ENCODE measurements at regions of chr1 and their contacts with region 1.

Region 1: DNA sequence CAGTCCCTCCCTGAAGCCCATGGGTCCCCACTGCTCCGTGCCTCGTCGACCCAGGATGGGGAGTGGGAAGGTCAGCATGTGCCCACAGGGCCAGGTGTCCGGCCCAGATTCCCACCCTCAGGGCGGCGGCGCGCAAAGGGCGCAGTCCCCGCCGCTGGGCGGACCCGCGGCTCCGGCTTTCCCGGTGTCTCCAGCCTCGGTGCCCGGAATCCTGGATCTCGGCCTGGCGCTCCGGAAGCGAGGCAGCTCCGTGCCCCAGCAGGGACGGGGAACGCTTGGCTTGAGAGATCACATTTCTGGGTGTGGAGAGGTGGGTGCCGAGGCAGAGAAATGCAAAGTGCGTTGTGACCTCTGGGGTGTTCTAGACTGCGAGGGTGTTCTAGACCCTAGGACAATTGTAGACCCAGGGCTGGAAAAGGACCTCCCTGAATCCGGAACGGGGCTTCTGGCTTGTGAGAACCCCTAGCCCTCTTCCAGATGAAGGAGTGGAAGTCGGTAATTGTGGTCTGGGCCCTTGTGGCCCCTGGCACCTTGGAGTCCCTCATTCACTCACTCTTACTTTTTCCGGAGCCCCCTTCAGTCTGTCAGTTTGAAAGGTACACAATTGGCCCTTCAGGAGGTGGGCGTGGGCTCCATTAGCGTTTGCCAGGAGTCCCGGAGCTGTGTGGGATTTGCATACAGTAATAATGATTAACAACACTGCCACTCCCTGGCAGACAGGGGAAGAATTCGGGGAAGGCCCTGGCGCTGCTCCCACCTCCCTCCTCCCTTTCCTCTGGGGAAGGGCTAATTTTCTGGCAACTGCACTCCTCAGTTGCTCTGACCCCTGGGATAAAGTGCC is 1.6 kb upstream of the KCND3 start:
- DNase-seq: peak; percentile 84 to 91 (median 90)
- ATAC-seq: peak; percentile 73 to 80
- H3K4me3 ChIP-seq: peak overlapping the region; percentile 62
- H3K27ac ChIP-seq: peak overlapping the region; percentile 61
- H3K4me1 ChIP-seq: peaks cover 5% of the 10 kb centered on the region
- H3K27me3 ChIP-seq: no peaks in the 10 kb centered on the region

Region 2: DNA sequence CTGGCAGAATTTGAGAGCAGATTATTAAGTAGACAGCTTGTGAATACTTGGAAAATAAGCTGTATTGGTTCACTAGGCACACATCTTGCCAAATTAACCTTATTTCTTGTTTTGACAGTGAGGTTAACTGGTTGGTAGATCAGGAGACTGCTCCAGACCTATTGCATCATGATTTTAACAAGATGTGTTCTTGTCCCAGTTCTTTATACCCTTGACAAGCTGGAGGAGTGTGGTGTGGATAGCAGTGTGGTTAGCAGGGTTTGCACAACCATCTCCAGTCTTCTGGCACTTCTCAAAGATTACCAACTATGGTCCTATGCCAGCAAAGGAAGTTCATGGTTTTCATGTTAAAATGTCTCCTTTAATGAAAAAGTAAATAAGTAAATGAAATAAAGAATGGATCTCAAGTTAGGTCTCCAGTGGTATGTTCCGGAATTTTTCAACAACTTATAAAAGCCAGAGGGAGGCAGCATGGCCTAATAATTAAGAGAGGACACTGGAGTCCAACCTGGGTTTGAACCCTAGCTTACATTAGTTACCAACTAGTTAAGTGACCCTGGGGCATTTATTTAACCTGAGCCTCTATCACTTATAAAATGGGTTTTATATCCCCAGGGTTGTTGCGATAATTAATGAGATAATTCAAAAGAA is 201.3 kb before region 1 on chr1:
- intact Hi-C with region 1: loop called in 1 of 4 experiments (anchors 10 kb)
- DNase-seq: no peak
- ATAC-seq: peak; percentile 37 to 50
- H3K4me3 ChIP-seq: no peak overlapping the region
- H3K27ac ChIP-seq: no peak overlapping the region
- H3K4me1 ChIP-seq: peaks cover 4% of the 10 kb centered on the region
- H3K27me3 ChIP-seq: no peaks in the 10 kb centered on the region

Region 3: DNA sequence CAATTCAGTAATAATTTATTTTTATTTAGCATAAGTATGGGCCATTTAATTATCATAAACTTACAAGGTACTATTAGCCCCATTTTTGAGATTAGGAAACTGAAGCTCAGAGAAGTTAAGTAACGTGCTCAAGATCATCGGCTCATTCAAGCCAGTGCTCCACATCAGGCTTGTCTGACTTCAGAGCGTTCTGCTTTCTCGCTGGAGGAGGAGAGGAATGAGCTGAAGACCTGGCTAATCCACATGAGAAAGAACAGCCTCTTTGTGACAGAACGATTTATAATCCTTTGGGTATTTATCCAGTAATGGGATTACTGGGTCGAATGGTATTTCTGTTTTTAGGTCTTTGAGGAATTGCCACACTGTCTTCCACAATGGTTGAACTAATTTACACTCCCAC is 195.7 kb before region 1 on chr1:
- intact Hi-C with region 1: loop called in 3 of 4 experiments (anchors 5 to 10 kb)
- DNase-seq: no peak
- ATAC-seq: no peak
- H3K4me3 ChIP-seq: no peak overlapping the region
- H3K27ac ChIP-seq: no peak overlapping the region
- H3K4me1 ChIP-seq: peaks cover 2% of the 10 kb centered on the region
- H3K27me3 ChIP-seq: no peaks in the 10 kb centered on the region

Region 4: DNA sequence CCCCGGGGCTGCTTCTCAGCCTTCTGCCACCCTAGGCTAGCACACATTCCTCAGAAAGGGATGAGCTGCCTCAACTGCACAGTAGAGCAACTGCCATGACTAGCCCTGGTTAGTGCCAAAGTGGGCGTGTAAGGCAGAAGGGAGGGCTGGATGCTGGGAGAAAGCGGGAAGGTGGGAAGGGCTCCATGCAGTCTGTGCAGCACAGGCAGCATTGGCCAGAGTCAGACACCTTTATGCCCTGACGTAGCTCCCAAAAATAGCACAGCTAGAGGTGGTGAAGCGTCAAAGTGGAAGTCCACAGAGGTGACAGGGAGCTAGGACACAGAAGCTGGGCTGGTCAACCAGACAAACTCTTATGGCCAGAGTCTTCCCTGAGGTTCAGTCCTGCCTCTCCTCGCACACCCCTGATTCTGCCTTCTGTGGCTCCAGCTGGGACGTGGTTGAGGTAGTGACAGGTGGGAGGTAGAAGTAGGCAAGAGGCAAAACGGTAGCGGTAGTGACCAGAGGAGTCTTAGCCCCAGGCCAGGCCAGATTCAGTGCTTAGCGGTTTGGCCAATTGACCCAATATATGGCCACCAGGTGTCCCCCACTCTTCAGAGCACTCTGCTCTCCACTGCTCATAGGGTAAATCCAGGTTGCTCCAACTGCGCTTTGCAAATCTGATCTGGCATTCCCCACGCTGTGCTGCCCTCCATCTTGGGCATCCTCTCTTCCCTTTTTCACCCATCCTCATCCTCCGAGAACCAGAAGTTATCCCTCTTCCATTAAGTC is 189.8 kb before region 1 on chr1:
- intact Hi-C with region 1: loop called in 3 of 4 experiments (anchors 5 to 10 kb)
- DNase-seq: peak; percentile 37 to 68 (median 65)
- ATAC-seq: peak; percentile 84
- H3K4me3 ChIP-seq: no peak overlapping the region
- H3K27ac ChIP-seq: peak overlapping the region; percentile 71
- H3K4me1 ChIP-seq: no peaks in the 10 kb centered on the region
- H3K27me3 ChIP-seq: no peaks in the 10 kb centered on the region

Region 5: GRCh38 chr1:111904478-111905218 is 86.5 kb before region 1 on chr1:
- intact Hi-C with region 1: loop called in 1 of 4 experiments (anchors 10 kb)
- DNase-seq: peak in 2 of 3 donors; percentile 25 to 54
- ATAC-seq: peak; percentile 87 to 89
- H3K4me3 ChIP-seq: no peak overlapping the region
- H3K27ac ChIP-seq: peak overlapping the region; percentile 54
- H3K4me1 ChIP-seq: peaks cover 4% of the 10 kb centered on the region
- H3K27me3 ChIP-seq: no peaks in the 10 kb centered on the region

Region 6: GRCh38 chr1:112144733-112145426 is 153.8 kb after region 1 on chr1:
- intact Hi-C with region 1: no loop called
- DNase-seq: peak; percentile 22 to 55 (median 50)
- ATAC-seq: peak; percentile 85 to 86
- H3K4me3 ChIP-seq: no peak overlapping the region
- H3K27ac ChIP-seq: peak overlapping the region; percentile 90
- H3K4me1 ChIP-seq: no peaks in the 10 kb centered on the region
- H3K27me3 ChIP-seq: no peaks in the 10 kb centered on the region

Region 7: GRCh38 chr1:112337028-112337531 is 346.0 kb after region 1 on chr1:
- intact Hi-C with region 1: loop called in 3 of 4 experiments (anchors 5 to 10 kb)
- DNase-seq: peak; percentile 58 to 79 (median 66)
- ATAC-seq: peak; percentile 85 to 89
- H3K4me3 ChIP-seq: no peak overlapping the region
- H3K27ac ChIP-seq: no peak overlapping the region
- H3K4me1 ChIP-seq: no peaks in the 10 kb centered on the region
- H3K27me3 ChIP-seq: no peaks in the 10 kb centered on the region

Measured in right cardiac atrium (tissue), 5 donors.